ENCODE measurements at regions of chr7 and their contacts with region 1.

Region 1: GRCh38 chr7:134140889-134141867 is 14.0 kb downstream of the LRGUK start:
- DNase-seq: peak; percentile 57 to 92
- H3K4me3 ChIP-seq: no peak overlapping the region
- H3K27ac ChIP-seq: no peak overlapping the region
- H3K4me1 ChIP-seq: peaks cover 2 to 6% (median 3%) of the 10 kb centered on the region in 4 experiments; a peak in 3 of 7 replicates
- H3K27me3 ChIP-seq: no peaks in the 10 kb centered on the region
- CTCF ChIP-seq: peak; percentile 87 to 98 (median 96)
- EP300 ChIP-seq: no peak; a peak in 1 of 3 replicates
- POLR2A ChIP-seq: no peak
- RAD21 ChIP-seq: peak; percentile 97

Region 2: DNA sequence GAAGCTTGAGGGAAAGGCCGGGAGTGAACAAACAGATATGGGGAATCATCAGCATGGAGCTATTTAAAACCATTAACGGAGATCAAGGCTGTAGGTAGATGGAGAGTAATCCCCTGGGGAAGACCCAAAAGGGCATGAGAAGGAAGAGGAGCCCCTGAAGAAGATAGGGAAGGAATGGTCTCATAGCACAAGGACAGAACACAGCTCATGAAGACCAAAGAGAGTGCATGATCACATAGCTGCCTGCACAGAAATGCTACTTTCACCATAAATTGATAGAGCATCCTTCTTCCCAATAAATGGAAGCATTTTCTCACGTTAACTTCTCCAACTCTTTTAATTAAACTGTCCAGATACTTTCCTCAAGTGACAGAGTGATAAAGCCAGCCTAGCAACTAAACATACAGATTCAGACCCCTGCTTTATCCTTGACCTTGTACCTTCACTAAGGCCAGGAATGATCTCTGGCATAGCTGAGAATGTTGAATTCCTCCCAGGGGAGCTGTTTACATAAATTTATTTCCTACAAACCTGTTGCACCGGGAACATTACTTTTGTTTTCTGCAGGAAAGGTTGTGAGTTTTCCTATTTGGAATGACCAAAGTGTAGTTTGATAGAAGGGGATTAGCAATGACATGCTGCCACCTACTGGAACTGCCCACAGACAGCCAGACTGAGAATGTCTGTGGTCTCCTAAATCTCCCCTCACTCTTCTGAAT is 124.8 kb before region 1 on chr7:
- CTCF ChIA-PET with region 1: interaction called, 20 read pairs
- POLR2A ChIA-PET with region 1: no interaction called
- DNase-seq: peak in 1 of 2 experiments; percentile 60
- H3K4me3 ChIP-seq: no peak overlapping the region
- H3K27ac ChIP-seq: no peak overlapping the region
- H3K4me1 ChIP-seq: peaks cover 0 to 5% (median 2%) of the 10 kb centered on the region in 4 experiments; a peak in 3 of 7 replicates
- H3K27me3 ChIP-seq: no peaks in the 10 kb centered on the region
- CTCF ChIP-seq: peak; percentile 37 to 81 (median 61)
- EP300 ChIP-seq: no peak
- POLR2A ChIP-seq: no peak
- RAD21 ChIP-seq: peak; percentile 88 to 91

Region 3: DNA sequence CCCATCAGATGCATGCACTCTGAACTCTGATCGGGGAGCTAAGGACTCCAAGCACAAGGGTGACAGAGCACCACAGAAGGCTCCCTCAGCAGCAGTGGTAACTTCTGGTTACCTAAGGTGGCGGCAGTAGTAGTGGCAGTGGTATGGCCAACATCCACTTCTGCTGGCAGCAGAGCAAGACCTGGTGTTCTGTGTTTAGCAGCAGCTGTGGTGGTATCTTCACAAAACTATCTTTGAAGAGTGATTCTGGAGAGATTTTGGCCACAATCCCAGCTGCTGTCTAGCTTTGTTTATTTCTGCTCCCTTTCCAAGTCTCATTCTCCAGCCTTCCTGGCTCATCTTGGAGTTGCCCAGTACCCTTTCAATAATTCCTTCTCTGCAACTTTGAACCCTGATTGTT is 116.4 kb before region 1 on chr7:
- CTCF ChIA-PET with region 1: interaction called, 20 read pairs
- POLR2A ChIA-PET with region 1: no interaction called
- DNase-seq: no peak
- H3K4me3 ChIP-seq: no peak overlapping the region
- H3K27ac ChIP-seq: no peak overlapping the region
- H3K4me1 ChIP-seq: peaks cover 0 to 10% (median 4%) of the 10 kb centered on the region in 4 experiments; a peak in 3 of 7 replicates
- H3K27me3 ChIP-seq: no peaks in the 10 kb centered on the region
- CTCF ChIP-seq: no peak
- EP300 ChIP-seq: no peak
- POLR2A ChIP-seq: no peak
- RAD21 ChIP-seq: no peak

Region 4: DNA sequence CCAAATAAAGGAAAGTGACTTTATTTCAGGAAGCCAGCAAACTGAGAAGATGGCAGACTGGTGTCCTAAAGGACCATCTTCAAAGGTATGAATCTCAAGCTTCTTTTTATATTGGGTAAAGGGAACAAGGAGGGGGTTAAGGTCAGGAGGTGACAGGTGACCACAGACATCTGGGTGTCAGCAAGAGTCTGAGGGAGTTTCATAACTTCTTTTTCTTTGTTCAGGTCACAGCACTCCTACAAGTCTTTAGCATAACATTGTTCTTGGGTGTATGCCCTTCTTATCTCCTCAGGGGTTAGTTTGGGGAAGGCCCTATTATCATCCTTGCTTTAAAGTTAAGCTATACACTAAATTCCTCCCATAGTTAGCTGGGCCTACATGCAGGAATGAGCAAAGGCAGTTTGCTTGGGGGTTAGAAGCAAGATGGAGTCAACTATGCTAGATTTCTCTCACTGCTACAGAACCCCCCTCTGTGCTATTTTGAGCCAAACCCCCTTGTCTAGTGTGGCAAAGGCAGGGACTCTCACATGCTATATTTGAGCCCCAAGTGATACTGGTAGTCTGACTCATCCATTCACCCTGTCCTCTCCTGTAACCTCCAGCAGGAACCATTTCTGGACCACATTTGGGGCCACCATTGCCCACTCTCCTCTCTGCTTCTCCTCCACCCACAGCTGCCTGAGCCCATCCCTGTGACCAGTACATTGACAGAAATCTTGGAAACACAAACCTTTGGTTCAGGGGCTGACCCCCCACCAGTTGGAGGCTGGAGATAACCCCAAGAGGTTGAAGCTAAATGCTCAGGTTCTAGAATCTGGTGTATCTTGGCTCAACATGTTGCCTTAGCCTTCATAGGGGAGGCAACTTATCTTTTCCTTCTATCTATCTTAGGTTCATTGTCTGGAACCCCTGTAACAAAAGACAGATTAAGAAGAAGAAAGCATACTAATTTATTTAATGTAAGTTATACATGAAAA is 69.5 kb before region 1 on chr7:
- CTCF ChIA-PET with region 1: interaction called, 11 read pairs
- POLR2A ChIA-PET with region 1: no interaction called
- DNase-seq: no peak
- H3K4me3 ChIP-seq: no peak overlapping the region
- H3K27ac ChIP-seq: no peak overlapping the region
- H3K4me1 ChIP-seq: no peaks in the 10 kb centered on the region; a peak in 1 of 7 replicates
- H3K27me3 ChIP-seq: no peaks in the 10 kb centered on the region
- CTCF ChIP-seq: no peak
- EP300 ChIP-seq: no peak
- POLR2A ChIP-seq: no peak
- RAD21 ChIP-seq: no peak

Region 5: DNA sequence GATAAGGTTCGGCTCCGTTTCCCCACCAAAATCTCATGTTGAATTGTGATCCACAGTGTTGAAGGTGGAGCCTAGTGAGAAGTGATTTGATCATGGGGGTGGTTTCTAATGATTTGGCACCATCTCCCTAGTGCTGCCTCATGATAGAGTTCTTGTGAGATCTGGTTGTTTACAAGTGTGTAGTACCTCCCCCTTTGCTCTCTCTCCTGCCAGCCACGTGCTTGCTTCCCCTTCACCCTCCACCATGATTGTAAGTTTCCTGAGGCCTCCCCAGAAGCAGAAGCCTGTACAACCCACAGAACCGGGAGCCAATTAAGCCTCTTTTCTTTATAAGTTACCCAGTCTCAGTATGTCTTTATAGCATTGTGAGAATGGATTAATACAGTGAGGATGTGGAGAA is 26.2 kb before region 1 on chr7:
- CTCF ChIA-PET with region 1: no interaction called
- POLR2A ChIA-PET with region 1: no interaction called
- DNase-seq: no peak
- H3K4me3 ChIP-seq: no peak overlapping the region
- H3K27ac ChIP-seq: no peak overlapping the region
- H3K4me1 ChIP-seq: peaks cover 0 to 12% (median 2%) of the 10 kb centered on the region in 4 experiments; a peak in 1 of 7 replicates
- H3K27me3 ChIP-seq: no peaks in the 10 kb centered on the region
- CTCF ChIP-seq: no peak
- EP300 ChIP-seq: no peak
- POLR2A ChIP-seq: no peak
- RAD21 ChIP-seq: no peak

Region 6: GRCh38 chr7:134126966-134127848 is 14.0 kb before region 1 on chr7 and contains the start of gene LRGUK:
- CTCF ChIA-PET with region 1: interaction called, 16 read pairs
- POLR2A ChIA-PET with region 1: interaction called, 5 read pairs
- DNase-seq: peak; percentile 56 to 88
- H3K4me3 ChIP-seq: peak within 1 kb of the TSS; percentile 54 to 85 (median 82)
- H3K27ac ChIP-seq: no peak within 1 kb of the TSS
- H3K4me1 ChIP-seq: peaks cover 5 to 20% (median 8%) of the 10 kb centered on the region in 4 experiments
- H3K27me3 ChIP-seq: no peaks in the 10 kb centered on the region; a peak in 1 of 7 replicates
- CTCF ChIP-seq: no peak
- EP300 ChIP-seq: no peak
- POLR2A ChIP-seq: no peak
- RAD21 ChIP-seq: no peak
- total RNA-seq, gene LRGUK: 2.4 and 3.6 TPM in 2 replicates

Region 7: DNA sequence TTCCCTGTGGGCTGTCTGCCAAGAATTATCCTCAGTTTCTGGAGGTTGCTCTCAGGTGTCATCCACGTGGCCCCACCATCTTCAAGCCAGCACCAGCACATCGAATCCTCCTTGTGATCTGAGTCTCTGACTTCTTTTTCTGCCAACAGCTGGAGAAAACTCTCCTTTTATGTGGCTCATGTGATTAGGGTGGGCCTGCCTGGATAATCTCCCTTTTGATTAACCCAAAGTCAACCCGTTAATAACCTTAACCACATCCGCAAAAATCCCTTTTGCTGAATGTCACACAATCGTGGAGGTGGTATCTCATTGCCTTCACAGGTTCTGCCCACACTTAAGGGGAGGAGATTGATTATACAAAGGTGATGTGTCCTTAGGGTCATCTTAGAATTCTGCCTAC is 59.8 kb after region 1 on chr7:
- CTCF ChIA-PET with region 1: no interaction called
- POLR2A ChIA-PET with region 1: no interaction called
- DNase-seq: no peak
- H3K4me3 ChIP-seq: no peak overlapping the region
- H3K27ac ChIP-seq: no peak overlapping the region
- H3K4me1 ChIP-seq: peaks cover 0 to 7% (median under 1%) of the 10 kb centered on the region in 4 experiments; a peak in 2 of 7 replicates
- H3K27me3 ChIP-seq: no peaks in the 10 kb centered on the region
- CTCF ChIP-seq: no peak
- EP300 ChIP-seq: no peak
- POLR2A ChIP-seq: no peak
- RAD21 ChIP-seq: no peak

Region 8: DNA sequence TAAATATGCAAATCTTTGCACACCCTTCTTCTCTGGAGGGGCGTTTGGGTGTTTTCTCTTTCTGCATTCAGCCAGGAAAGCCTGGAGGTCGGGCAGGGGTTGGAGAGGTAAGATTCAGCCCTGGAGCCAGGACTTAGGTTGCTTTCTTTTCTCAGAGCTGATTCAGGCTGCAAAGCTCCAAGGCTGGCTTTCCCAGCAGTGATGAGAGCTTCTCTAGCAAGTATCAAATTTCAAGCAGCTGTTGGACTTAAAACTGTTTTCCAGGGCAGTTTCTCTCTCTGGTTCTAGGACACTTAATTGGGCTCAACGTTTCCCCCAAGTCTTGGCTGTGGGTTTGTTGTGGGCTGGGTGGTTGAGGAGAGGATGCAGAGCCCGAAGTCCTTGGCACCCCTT is 386.8 kb after region 1 on chr7:
- CTCF ChIA-PET with region 1: no interaction called
- POLR2A ChIA-PET with region 1: no interaction called
- DNase-seq: no peak
- H3K4me3 ChIP-seq: no peak overlapping the region
- H3K27ac ChIP-seq: no peak overlapping the region
- H3K4me1 ChIP-seq: peaks cover 0 to 5% (median 1%) of the 10 kb centered on the region in 4 experiments; a peak in 2 of 7 replicates
- H3K27me3 ChIP-seq: no peaks in the 10 kb centered on the region; a peak in 1 of 7 replicates
- CTCF ChIP-seq: no peak
- EP300 ChIP-seq: no peak
- POLR2A ChIP-seq: no peak
- RAD21 ChIP-seq: no peak

Measured in H1 (cell line).